ENCODE measurements at regions of chr22 and their contacts with region 1.

Region 1: DNA sequence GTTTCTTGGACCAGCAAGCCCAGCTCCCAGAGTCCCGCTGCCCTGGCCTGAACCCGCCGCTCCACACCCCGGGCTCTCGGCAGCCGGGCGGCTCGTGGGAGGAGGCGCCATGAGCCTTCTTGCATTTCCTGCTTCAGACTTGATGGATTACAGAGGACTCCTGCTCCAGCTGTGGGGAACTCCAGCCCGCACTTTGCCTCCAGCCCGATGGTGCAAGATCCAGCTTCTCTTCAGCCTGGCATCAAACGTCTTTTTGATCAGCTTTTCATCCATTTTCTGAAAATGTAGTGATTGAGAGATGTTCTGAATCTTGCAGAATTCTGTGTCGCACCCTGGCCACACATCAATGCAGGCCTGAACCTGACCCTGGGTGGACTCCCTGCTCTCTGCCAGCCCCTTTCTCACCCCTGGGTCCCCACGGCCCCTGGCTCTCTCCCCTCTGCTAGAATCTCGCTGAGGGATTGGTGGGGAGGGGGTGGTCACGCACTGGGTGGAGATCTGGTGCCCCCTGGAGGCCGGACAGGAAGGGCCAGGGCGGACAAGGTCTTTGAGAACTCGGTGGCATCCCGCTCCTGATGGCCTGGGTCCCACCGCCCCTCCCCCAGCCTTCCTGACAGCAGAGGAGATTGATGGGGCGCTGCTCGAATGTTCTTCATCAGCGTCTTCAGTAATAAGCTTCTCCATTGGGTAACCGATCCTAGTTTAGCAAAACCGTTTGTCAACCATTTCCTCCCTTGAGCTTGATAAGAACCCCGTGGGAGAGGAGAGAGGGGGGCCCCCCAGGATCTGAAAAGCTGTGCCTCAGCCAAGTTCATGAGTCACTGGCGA is 12.1 kb upstream of the NFAM1 start:
- DNase-seq: peak; percentile 94
- H3K4me3 ChIP-seq: peak overlapping the region; percentile 46
- H3K27ac ChIP-seq: peak overlapping the region; percentile 85
- H3K4me1 ChIP-seq: peaks cover 26% of the 10 kb centered on the region
- H3K27me3 ChIP-seq: no peaks in the 10 kb centered on the region
- CTCF ChIP-seq: peak; percentile 83

Region 2: DNA sequence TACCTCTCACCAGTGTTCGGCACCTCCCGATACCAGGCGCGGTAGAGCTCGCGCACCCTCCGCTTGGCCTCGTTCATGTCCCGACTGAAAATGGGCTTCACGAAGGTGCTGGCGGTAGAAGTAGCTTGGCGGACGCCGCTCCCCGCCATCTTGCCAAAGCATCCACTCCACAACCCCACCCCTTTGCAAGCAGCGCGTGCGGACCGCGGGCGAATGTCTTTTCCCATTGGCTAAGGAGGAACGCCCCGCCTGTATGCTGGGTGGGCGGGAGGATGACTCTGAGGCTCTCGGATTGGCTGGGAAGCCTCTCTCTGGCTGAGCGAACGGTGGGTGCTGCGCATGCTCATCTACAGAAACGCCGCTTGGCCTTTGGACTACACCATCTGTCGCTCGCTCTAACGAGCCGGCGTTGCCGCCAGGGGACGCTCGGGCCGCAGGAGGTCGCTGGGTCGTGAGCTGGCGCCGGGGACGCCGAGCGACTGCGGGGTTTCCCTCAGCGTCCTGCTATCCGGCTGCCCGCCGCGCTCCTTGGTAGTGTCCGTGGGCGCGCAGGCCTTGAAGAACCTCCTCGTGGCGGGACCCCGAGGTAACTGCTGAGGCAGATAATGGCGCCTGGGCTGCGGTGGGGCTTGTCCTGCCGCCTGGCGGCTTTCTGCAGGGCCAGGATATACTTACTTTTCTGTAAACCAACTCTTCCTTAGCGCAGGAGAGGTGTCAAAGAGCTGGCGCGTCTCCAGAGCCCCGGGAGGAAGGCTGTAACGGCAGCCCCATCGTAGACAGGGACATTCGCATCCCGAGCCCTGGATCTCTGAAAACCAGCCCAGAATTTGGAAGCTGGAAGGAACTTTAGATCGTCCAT is 353.5 kb before region 1 on chr22 and contains the start of gene NDUFA6:
- CTCF ChIA-PET with region 1: interaction called, 20 read pairs
- POLR2A ChIA-PET with region 1: interaction called, 3 read pairs
- intact Hi-C with region 1: loop called (anchors 2 kb)
- DNase-seq: peak; percentile 100
- H3K4me3 ChIP-seq: peak within 1 kb of the TSS; percentile 74
- H3K27ac ChIP-seq: peak within 1 kb of the TSS; percentile 97
- H3K4me1 ChIP-seq: peaks cover 15% of the 10 kb centered on the region
- H3K27me3 ChIP-seq: no peaks in the 10 kb centered on the region
- CTCF ChIP-seq: peak; percentile 92
- total RNA-seq, gene NDUFA6: 138 and 166 TPM in 2 replicates

Region 3: GRCh38 chr22:42101199-42101598 is 343.1 kb before region 1 on chr22:
- CTCF ChIA-PET with region 1: interaction called, 11 read pairs
- POLR2A ChIA-PET with region 1: no interaction called
- intact Hi-C with region 1: no loop called
- DNase-seq: no peak
- H3K4me3 ChIP-seq: no peak overlapping the region
- H3K27ac ChIP-seq: no peak overlapping the region
- H3K4me1 ChIP-seq: no peaks in the 10 kb centered on the region
- H3K27me3 ChIP-seq: no peaks in the 10 kb centered on the region
- CTCF ChIP-seq: no peak

Region 4: GRCh38 chr22:42114721-42115120 is 329.6 kb before region 1 on chr22:
- CTCF ChIA-PET with region 1: interaction called, 13 read pairs
- POLR2A ChIA-PET with region 1: no interaction called
- intact Hi-C with region 1: no loop called
- DNase-seq: peak; percentile 50
- H3K4me3 ChIP-seq: no peak overlapping the region
- H3K27ac ChIP-seq: no peak overlapping the region
- H3K4me1 ChIP-seq: peaks cover 9% of the 10 kb centered on the region
- H3K27me3 ChIP-seq: no peaks in the 10 kb centered on the region
- CTCF ChIP-seq: peak; percentile 48

Region 5: DNA sequence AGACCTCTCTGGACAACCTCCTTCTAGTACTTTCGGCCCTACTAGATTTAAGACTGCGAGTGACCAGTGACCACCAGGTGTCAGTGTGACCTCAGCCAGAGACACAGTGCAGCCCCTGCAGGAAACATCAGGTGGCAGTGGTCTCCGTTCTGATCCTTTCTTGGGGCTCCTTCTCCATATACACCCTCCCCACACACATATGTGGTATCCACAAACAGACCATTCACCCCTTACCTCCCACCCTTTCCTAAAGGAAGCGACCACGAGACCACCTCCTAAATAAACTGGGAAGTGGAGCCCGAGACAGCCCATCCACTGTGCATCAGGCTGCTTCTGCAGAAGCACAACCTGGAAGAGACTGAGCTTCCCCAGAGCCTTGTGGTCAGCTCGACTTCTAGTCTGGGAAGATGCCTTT is 275.2 kb before region 1 on chr22:
- CTCF ChIA-PET with region 1: interaction called, 5 read pairs
- POLR2A ChIA-PET with region 1: interaction called, 3 read pairs
- intact Hi-C with region 1: loop called (anchors 1 kb)
- DNase-seq: peak; percentile 70
- H3K4me3 ChIP-seq: no peak overlapping the region
- H3K27ac ChIP-seq: no peak overlapping the region
- H3K4me1 ChIP-seq: peaks cover 24% of the 10 kb centered on the region
- H3K27me3 ChIP-seq: no peaks in the 10 kb centered on the region
- CTCF ChIP-seq: peak; percentile 77

Measured in A673 (cell line).